ENCODE measurements at regions of chr5 and their contacts with region 1.

Region 1: DNA sequence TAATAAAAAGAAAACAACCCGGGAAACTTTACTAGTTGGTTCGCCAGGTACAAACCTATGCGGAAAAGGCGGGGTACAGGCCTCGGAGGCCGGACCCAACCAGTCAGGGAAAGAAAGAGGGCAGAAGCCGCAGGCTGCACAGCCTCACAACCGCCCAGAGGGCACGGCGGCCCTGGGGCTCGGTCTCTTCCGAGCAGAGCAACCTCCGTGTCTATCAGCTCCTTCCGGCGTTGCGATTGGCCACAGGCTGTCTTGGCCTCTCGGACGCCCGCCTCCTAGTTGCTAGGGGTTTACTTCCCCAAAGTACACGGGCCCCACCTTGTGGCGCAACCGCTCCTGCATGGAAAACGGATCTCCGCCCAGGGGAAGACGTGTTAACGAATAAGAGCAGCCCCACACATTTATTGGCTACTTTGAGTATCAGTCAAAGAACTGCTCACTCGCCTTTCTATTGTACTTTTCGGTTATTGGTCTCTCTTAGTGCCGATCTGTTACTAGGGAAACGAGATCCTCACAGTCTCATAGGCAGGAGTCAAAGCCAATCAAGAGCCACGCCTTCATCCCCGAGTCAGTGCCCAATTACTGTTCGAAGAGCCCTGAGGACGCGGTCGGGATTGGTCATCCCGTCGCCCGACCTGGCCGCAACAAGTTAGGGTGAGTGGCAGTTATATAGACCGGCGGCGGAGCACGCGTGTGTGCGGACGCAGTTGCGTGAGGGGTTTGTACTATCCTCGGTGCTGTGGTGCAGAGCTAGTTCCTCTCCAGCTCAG is at the start of gene G3BP1:
- DNase-seq: peak; percentile 100
- ATAC-seq: peak; percentile 94
- H3K4me3 ChIP-seq: peak within 1 kb of the TSS; percentile 91 to 97 (median 95)
- H3K27ac ChIP-seq: peak within 1 kb of the TSS; percentile 93
- H3K4me1 ChIP-seq: peaks cover 37% of the 10 kb centered on the region
- H3K27me3 ChIP-seq: no peaks in the 10 kb centered on the region; a peak in 1 of 5 replicates
- CTCF ChIP-seq: peak; percentile 89
- EP300 ChIP-seq: peak; percentile 26 to 32; a peak in 2 of 4 replicates
- POLR2A ChIP-seq: peak; percentile 98 to 99
- RAD21 ChIP-seq: peak; percentile 67
- total RNA-seq, gene G3BP1: 320 and 517 TPM in 2 replicates

Region 2: GRCh38 chr5:151252762-151253604 is 518.5 kb before region 1 on chr5 and contains the start of gene GM2A:
- CTCF ChIA-PET with region 1: no interaction called
- POLR2A ChIA-PET with region 1: interaction called, 11 read pairs
- in situ Hi-C with region 1: no loop called
- intact Hi-C with region 1: loop called (anchors 5 kb)
- DNase-seq: peak; percentile 99
- ATAC-seq: peak; percentile 93
- H3K4me3 ChIP-seq: peak within 1 kb of the TSS; percentile 83 to 87 (median 84)
- H3K27ac ChIP-seq: peak within 1 kb of the TSS; percentile 84
- H3K4me1 ChIP-seq: peaks cover 41% of the 10 kb centered on the region
- H3K27me3 ChIP-seq: no peaks in the 10 kb centered on the region; a peak in 1 of 5 replicates
- CTCF ChIP-seq: no peak
- EP300 ChIP-seq: no peak
- POLR2A ChIP-seq: peak; percentile 90 to 98
- RAD21 ChIP-seq: no peak
- total RNA-seq, gene GM2A: 16.6 and 29.6 TPM in 2 replicates

Region 3: GRCh38 chr5:151740336-151740942 is 31.0 kb before region 1 on chr5:
- CTCF ChIA-PET with region 1: no interaction called
- POLR2A ChIA-PET with region 1: no interaction called
- in situ Hi-C with region 1: no loop called
- intact Hi-C with region 1: loop called (anchors 1 kb)
- DNase-seq: peak; percentile 30
- ATAC-seq: peak; percentile 74
- H3K4me3 ChIP-seq: no peak overlapping the region
- H3K27ac ChIP-seq: no peak overlapping the region
- H3K4me1 ChIP-seq: no peaks in the 10 kb centered on the region
- H3K27me3 ChIP-seq: no peaks in the 10 kb centered on the region
- CTCF ChIP-seq: peak; percentile 76
- EP300 ChIP-seq: no peak
- POLR2A ChIP-seq: no peak
- RAD21 ChIP-seq: peak; percentile 54; the same call in 1 of the 2 replicates

Region 4: DNA sequence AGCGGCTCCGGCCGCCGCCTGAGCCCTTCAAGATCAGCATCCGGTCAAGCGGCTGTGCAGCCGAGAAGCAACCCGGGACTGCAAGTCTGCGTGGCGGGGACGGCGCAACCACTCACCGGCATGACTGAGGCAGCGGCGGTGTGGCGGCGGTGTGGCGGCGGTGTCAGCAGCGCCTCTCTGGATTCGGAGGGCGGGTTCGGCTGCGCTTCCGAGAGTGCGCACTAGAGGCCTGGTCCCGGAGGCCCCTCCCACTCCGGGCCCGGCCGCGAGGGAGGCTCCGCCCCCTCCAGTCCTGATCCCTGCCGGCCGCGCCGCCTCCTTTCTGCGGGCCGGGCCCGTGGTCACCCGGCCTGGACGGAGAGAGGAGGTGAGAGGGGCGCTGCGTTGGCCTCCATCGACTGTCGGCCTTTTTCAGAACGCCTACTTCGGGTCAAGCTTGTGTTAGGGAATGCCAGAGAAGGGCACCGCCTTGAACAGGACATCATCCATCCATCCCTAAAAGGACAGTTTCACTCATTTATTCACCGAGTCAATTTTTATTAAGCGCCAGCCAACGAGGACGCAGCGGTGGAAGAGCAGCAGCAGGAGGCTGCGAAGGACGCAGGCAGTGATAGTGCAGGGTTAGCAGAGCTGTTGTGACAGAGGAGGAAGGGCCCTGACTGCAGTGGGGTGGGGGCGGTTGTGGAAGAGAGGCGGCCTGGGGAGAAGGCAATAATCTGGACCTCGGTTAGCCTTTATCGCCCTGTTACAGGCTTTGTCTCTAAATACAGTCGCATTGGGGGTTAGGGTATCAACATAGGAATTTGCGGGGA is 12.8 kb before region 1 on chr5 and contains the start of gene ATOX1:
- CTCF ChIA-PET with region 1: interaction called, 3 read pairs
- POLR2A ChIA-PET with region 1: interaction called, 148 read pairs
- in situ Hi-C with region 1: no loop called
- intact Hi-C with region 1: loop called (anchors 1 kb)
- DNase-seq: peak; percentile 85
- ATAC-seq: peak; percentile 91
- H3K4me3 ChIP-seq: peak within 1 kb of the TSS; percentile 69 to 91 (median 82)
- H3K27ac ChIP-seq: peak within 1 kb of the TSS; percentile 68
- H3K4me1 ChIP-seq: peaks cover 54% of the 10 kb centered on the region
- H3K27me3 ChIP-seq: no peaks in the 10 kb centered on the region
- CTCF ChIP-seq: peak; percentile 41
- EP300 ChIP-seq: no peak
- POLR2A ChIP-seq: peak; percentile 82 to 96
- RAD21 ChIP-seq: no peak; the same call in 1 of the 2 replicates
- total RNA-seq, gene ATOX1: 124 and 146 TPM in 2 replicates

Region 5: DNA sequence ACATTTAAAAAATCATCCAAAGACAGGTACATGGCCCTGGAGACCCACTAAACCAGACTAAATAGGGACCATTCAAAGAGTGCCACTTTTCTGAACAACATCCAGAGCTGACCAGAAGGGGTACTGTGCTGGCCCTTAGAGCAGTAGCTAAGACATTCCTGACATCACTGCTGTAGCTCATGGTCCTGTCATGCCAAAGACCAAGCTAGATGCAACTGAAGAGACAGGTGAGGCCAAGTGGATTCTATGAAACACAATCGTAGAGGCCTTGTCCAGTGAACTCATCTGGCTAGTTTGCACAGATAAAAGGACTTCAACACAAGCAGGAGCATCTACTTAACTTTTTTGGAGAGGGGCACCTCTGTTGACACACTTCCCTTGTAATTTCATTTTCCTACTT is 43.6 kb after region 1 on chr5:
- CTCF ChIA-PET with region 1: no interaction called
- POLR2A ChIA-PET with region 1: interaction called, 73 read pairs
- in situ Hi-C with region 1: no loop called
- intact Hi-C with region 1: loop called (anchors 2 kb)
- DNase-seq: no peak
- ATAC-seq: peak; percentile 10; the same call in 1 of the 3 replicates
- H3K4me3 ChIP-seq: no peak overlapping the region
- H3K27ac ChIP-seq: no peak overlapping the region
- H3K4me1 ChIP-seq: peaks cover 37% of the 10 kb centered on the region
- H3K27me3 ChIP-seq: no peaks in the 10 kb centered on the region
- CTCF ChIP-seq: no peak
- EP300 ChIP-seq: no peak
- POLR2A ChIP-seq: no peak
- RAD21 ChIP-seq: no peak

Region 6: DNA sequence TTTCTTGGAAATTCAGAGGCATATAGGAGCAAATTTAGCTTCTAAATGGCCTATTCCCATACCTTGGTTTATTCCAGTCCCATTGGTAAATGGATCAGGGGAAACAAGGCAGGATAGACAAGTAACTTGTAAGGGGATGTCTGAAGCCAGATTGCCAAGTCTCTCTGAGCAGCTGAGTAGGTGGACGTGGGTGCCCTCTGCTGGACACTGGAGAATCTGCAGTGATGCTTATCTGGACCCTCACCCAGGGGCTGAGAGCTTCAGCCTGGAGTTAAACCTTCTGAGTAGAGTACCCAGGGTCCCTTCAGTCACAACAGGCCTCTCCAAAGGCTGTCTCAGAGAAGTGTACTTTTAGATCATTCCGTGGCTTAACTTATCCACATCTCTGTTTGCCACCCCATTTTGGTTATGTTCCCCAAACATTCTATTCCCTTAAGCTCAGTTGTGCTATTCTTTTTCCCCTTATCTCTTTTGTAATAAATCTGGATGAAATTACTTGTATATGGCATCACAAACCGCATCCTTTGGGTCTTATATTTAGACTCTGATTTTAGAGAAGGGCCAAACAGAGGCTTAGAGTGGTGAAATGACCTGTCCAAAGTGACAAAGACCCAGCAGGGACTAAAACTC is 371.5 kb after region 1 on chr5:
- CTCF ChIA-PET with region 1: no interaction called
- POLR2A ChIA-PET with region 1: interaction called, 4 read pairs
- in situ Hi-C with region 1: no loop called
- intact Hi-C with region 1: loop called (anchors 5 kb)
- DNase-seq: peak; percentile 43
- ATAC-seq: peak; percentile 94
- H3K4me3 ChIP-seq: no peak overlapping the region
- H3K27ac ChIP-seq: no peak overlapping the region
- H3K4me1 ChIP-seq: no peaks in the 10 kb centered on the region
- H3K27me3 ChIP-seq: peaks cover 0 to 6% of the 10 kb centered on the region in 2 experiments; a peak in 1 of 5 replicates
- CTCF ChIP-seq: peak; percentile 84
- EP300 ChIP-seq: no peak
- POLR2A ChIP-seq: no peak
- RAD21 ChIP-seq: peak; percentile 58; the same call in 1 of the 2 replicates

Measured in HepG2 (cell line).